ENCODE measurements at regions of chr3 and their contacts with region 1.

Region 1: DNA sequence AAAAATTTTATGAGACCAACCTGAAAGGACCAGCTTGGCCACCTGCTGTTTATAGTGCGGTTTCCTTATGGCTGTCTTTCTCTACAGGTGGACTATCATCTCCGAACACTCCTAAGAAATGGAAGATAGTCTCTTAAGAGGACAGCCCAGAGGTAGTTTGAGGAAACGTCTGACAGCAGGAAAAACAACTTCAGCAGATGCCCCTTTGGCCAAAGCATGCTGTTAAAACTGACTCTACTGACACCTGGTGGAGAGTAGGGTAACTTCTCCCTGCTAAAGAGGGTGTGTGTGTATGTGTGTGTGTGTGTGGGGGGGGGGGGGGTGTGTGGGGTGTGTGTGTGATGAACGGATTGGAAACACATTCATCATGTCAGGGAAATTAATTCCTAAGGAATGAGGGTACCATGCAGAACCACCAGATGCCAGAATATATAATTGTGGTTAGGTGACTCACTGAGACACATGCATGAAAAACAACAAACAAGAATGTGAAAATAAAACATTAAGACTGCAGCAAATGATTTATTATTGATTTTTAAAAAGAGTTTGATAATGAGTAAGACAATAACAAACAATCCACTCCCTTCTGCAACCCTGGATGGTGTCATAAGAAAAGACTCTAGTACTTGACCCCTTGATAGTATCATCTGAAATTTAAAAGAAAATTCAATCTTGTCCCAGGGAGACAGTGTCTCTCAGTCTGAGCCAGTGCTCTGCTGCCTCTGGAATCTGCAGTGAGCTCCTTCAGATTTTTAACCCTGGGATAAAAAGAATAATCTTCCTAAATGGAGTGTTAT is 256.5 kb downstream of the THRB start:
- DNase-seq: peak in 3 of 9 experiments; percentile 16 to 64 (median 50)
- ATAC-seq: peak; percentile 62
- H3K4me3 ChIP-seq: no peak overlapping the region
- H3K4me3 Mint-ChIP-seq: no peak overlapping the region
- H3K27ac ChIP-seq: no peak overlapping the region
- H3K27ac Mint-ChIP-seq: no peak overlapping the region
- H3K4me1 ChIP-seq: no peaks in the 10 kb centered on the region
- H3K4me1 Mint-ChIP-seq: no peaks in the 10 kb centered on the region
- H3K27me3 ChIP-seq: no peaks in the 10 kb centered on the region
- H3K27me3 Mint-ChIP-seq: peaks cover 3% of the 10 kb centered on the region
- CTCF ChIP-seq: peak; percentile 19

Region 2: GRCh38 chr3:23999012-23999641 is 239.0 kb before region 1 on chr3:
- CTCF ChIA-PET with region 1: interaction called, 6 read pairs
- POLR2A ChIA-PET with region 1: no interaction called
- intact Hi-C with region 1: loop called in 1 of 2 experiments (anchors 1 kb)
- DNase-seq: peak; percentile 22 to 64 (median 53)
- ATAC-seq: no peak
- H3K4me3 ChIP-seq: no peak overlapping the region
- H3K4me3 Mint-ChIP-seq: no peak overlapping the region
- H3K27ac ChIP-seq: no peak overlapping the region
- H3K27ac Mint-ChIP-seq: no peak overlapping the region
- H3K4me1 ChIP-seq: no peaks in the 10 kb centered on the region
- H3K4me1 Mint-ChIP-seq: no peaks in the 10 kb centered on the region
- H3K27me3 ChIP-seq: no peaks in the 10 kb centered on the region
- H3K27me3 Mint-ChIP-seq: peaks cover 4% of the 10 kb centered on the region
- CTCF ChIP-seq: peak; percentile 88

Measured in CD8-positive, alpha-beta T cell (primary cell).